Endothelial cell of umbilical vein (primary cell): ENCODE measurements at regions of chr14 and their contacts with region 1.

Region 1: GRCh38 chr14:21711360-21711961 is 37.8 kb upstream of the OR4E1 start:
- DNase-seq: peak; percentile 52
- H3K4me3 ChIP-seq: no peak overlapping the region
- H3K27ac ChIP-seq: no peak overlapping the region
- H3K4me1 ChIP-seq: no peaks in the 10 kb centered on the region
- H3K27me3 ChIP-seq: peaks cover 2 to 4% of the 10 kb centered on the region in 2 experiments
- CTCF ChIP-seq: peak; percentile 58 to 66
- POLR2A ChIP-seq: no peak

Region 2: DNA sequence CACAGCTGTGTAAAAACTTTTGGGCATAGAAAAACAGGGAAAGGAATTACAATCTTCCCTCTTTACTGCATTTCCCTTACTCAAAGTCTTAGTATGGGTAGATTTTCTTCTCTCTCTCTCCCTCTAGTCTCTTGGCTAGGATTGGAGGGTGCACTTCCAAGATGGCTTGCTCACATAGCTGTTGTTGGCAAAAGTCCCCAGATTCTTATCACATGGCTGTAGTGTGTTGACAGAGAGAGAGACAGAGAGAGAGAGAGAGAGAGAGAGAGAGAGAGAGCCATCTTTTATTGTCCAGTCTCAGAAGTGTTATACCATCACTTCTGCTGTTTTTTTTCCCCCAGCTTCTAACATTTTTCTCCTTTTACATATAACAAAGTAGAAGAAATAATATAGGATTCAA is 64.1 kb before region 1 on chr14:
- CTCF ChIA-PET with region 1: no interaction called
- POLR2A ChIA-PET with region 1: no interaction called
- dilution Hi-C with region 1: no loop called
- intact Hi-C with region 1: loop called (anchors 10 kb)
- DNase-seq: peak; percentile 35
- H3K4me3 ChIP-seq: no peak overlapping the region
- H3K27ac ChIP-seq: no peak overlapping the region
- H3K4me1 ChIP-seq: peaks cover 3% of the 10 kb centered on the region
- H3K27me3 ChIP-seq: no peaks in the 10 kb centered on the region
- CTCF ChIP-seq: no peak
- POLR2A ChIP-seq: no peak

Region 3: GRCh38 chr14:21723431-21724045 is 12.1 kb after region 1 on chr14:
- CTCF ChIA-PET with region 1: interaction called, 11 read pairs
- POLR2A ChIA-PET with region 1: no interaction called
- dilution Hi-C with region 1: no loop called
- intact Hi-C with region 1: no loop called
- DNase-seq: no peak
- H3K4me3 ChIP-seq: no peak overlapping the region
- H3K27ac ChIP-seq: no peak overlapping the region
- H3K4me1 ChIP-seq: no peaks in the 10 kb centered on the region
- H3K27me3 ChIP-seq: peaks cover 6 to 9% of the 10 kb centered on the region in 2 experiments
- CTCF ChIP-seq: peak; percentile 29 to 42
- POLR2A ChIP-seq: no peak